Naive thymus-derived CD4-positive, alpha-beta T cell (primary cell): ENCODE measurements at regions of chr20 and their contacts with region 1.

Region 1: GRCh38 chr20:51404298-51405060 is 138.0 kb downstream of the NFATC2 start:
- DNase-seq: peak; percentile 21 to 78 (median 36)
- ATAC-seq: peak; percentile 89
- H3K4me3 ChIP-seq: no peak overlapping the region
- H3K4me3 Mint-ChIP-seq: peak overlapping the region in 5 of 10 donors; percentile 3 to 74 (median 21)
- H3K27ac ChIP-seq: peak overlapping the region; percentile 62
- H3K27ac Mint-ChIP-seq: peak overlapping the region; percentile 82 to 100 (median 97)
- H3K4me1 ChIP-seq: peaks cover 48 to 95% of the 10 kb centered on the region in 2 donors
- H3K4me1 Mint-ChIP-seq: peaks cover 42 to 89% (median 62%) of the 10 kb centered on the region in 7 donors
- H3K27me3 ChIP-seq: no peaks in the 10 kb centered on the region
- H3K27me3 Mint-ChIP-seq: no peaks in the 10 kb centered on the region

Region 2: DNA sequence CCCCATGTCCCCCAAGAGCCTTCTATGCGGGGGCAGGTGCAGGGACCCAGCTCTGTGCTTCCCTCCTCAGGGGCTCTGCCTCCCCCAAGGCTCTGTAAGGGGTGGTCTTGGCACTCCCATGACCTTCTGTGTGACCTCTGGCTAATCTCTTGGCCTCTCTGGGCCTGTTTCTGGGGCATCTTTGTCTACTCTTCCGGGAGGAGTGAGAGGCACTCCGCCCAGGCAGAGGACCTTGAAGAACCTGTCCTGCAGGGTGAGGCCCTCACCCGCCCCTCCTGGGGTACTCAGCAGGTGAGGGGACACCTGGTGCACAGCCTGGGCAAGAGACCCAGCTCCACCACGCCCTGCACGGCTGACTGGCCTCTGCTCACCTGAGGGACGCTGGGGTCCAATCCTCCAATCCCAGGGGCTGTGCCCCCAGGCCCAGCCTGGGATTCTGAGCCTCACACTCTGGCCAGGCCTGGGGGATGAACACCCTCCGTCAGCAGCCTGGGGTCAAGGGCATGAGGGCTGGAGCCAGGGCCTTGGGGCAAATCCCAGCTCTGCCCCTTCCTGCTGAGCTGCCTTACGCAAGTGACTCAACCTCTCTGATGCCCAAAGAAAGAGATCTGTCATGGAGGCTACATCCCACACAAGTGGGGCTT is 1044.3 kb before region 1 on chr20:
- CTCF ChIA-PET with region 1: no interaction called
- POLR2A ChIA-PET with region 1: no interaction called
- intact Hi-C with region 1: no loop called
- DNase-seq: no peak
- ATAC-seq: no peak
- H3K4me3 ChIP-seq: no peak overlapping the region
- H3K4me3 Mint-ChIP-seq: no peak overlapping the region
- H3K27ac ChIP-seq: no peak overlapping the region
- H3K27ac Mint-ChIP-seq: no peak overlapping the region
- H3K4me1 ChIP-seq: no peaks in the 10 kb centered on the region
- H3K4me1 Mint-ChIP-seq: peaks cover 0 to 7% (median 0%) of the 10 kb centered on the region in 7 donors
- H3K27me3 ChIP-seq: no peaks in the 10 kb centered on the region
- H3K27me3 Mint-ChIP-seq: peaks cover 0 to 4% (median 2%) of the 10 kb centered on the region in 5 donors

Region 3: GRCh38 chr20:50958615-50959542 is 445.6 kb before region 1 on chr20 and contains the start of gene MOCS3:
- CTCF ChIA-PET with region 1: no interaction called
- POLR2A ChIA-PET with region 1: no interaction called
- intact Hi-C with region 1: loop called in 1 of 2 experiments (anchors 2 kb)
- DNase-seq: peak; percentile 57 to 95 (median 91)
- ATAC-seq: peak; percentile 86
- H3K4me3 ChIP-seq: peak within 1 kb of the TSS; percentile 93
- H3K4me3 Mint-ChIP-seq: peak within 1 kb of the TSS; percentile 92 to 99 (median 98)
- H3K27ac ChIP-seq: peak within 1 kb of the TSS; percentile 93
- H3K27ac Mint-ChIP-seq: peak within 1 kb of the TSS; percentile 97 to 100 (median 100)
- H3K4me1 ChIP-seq: peaks cover 22 to 25% of the 10 kb centered on the region in 2 donors
- H3K4me1 Mint-ChIP-seq: peaks cover 25 to 78% (median 66%) of the 10 kb centered on the region in 7 donors
- H3K27me3 ChIP-seq: no peaks in the 10 kb centered on the region
- H3K27me3 Mint-ChIP-seq: peaks cover 0 to 2% (median 0%) of the 10 kb centered on the region in 5 donors
- total RNA-seq, gene MOCS3: 2.5 to 8.9 (median 5.2) TPM

Region 4: GRCh38 chr20:51172974-51173397 is 231.5 kb before region 1 on chr20:
- CTCF ChIA-PET with region 1: no interaction called
- POLR2A ChIA-PET with region 1: no interaction called
- intact Hi-C with region 1: no loop called
- DNase-seq: no peak
- ATAC-seq: no peak
- H3K4me3 ChIP-seq: no peak overlapping the region
- H3K4me3 Mint-ChIP-seq: no peak overlapping the region
- H3K27ac ChIP-seq: no peak overlapping the region
- H3K27ac Mint-ChIP-seq: no peak overlapping the region
- H3K4me1 ChIP-seq: no peaks in the 10 kb centered on the region
- H3K4me1 Mint-ChIP-seq: peaks cover 0 to 2% (median 0%) of the 10 kb centered on the region in 7 donors
- H3K27me3 ChIP-seq: peaks cover 0 to 4% of the 10 kb centered on the region in 2 donors
- H3K27me3 Mint-ChIP-seq: peaks cover 22 to 55% (median 37%) of the 10 kb centered on the region in 5 donors

Region 5: GRCh38 chr20:51417250-51418136 is 13.0 kb after region 1 on chr20:
- CTCF ChIA-PET with region 1: interaction called, 3 read pairs
- POLR2A ChIA-PET with region 1: no interaction called
- intact Hi-C with region 1: loop called in 1 of 2 experiments (anchors 2 kb)
- DNase-seq: no peak
- ATAC-seq: peak; percentile 57
- H3K4me3 ChIP-seq: no peak overlapping the region
- H3K4me3 Mint-ChIP-seq: peak overlapping the region in 3 of 10 donors; percentile 23 to 37 (median 31)
- H3K27ac ChIP-seq: no peak overlapping the region
- H3K27ac Mint-ChIP-seq: peak overlapping the region; percentile 9 to 87 (median 72)
- H3K4me1 ChIP-seq: peaks cover 0 to 78% of the 10 kb centered on the region in 2 donors
- H3K4me1 Mint-ChIP-seq: peaks cover 10 to 69% (median 28%) of the 10 kb centered on the region in 7 donors
- H3K27me3 ChIP-seq: no peaks in the 10 kb centered on the region
- H3K27me3 Mint-ChIP-seq: no peaks in the 10 kb centered on the region

Region 6: GRCh38 chr20:51500311-51500710 is 95.8 kb after region 1 on chr20:
- CTCF ChIA-PET with region 1: no interaction called
- POLR2A ChIA-PET with region 1: no interaction called
- intact Hi-C with region 1: loop called in 1 of 2 experiments (anchors 1 kb)
- DNase-seq: peak in 8 of 9 donors; percentile 38 to 74 (median 54)
- ATAC-seq: peak; percentile 89
- H3K4me3 ChIP-seq: no peak overlapping the region
- H3K4me3 Mint-ChIP-seq: peak overlapping the region; percentile 21 to 99 (median 54)
- H3K27ac ChIP-seq: peak overlapping the region; percentile 58
- H3K27ac Mint-ChIP-seq: peak overlapping the region; percentile 65 to 100 (median 95)
- H3K4me1 ChIP-seq: peaks cover 59 to 60% of the 10 kb centered on the region in 2 donors
- H3K4me1 Mint-ChIP-seq: peaks cover 63 to 93% (median 87%) of the 10 kb centered on the region in 7 donors
- H3K27me3 ChIP-seq: no peaks in the 10 kb centered on the region
- H3K27me3 Mint-ChIP-seq: no peaks in the 10 kb centered on the region

Region 7: GRCh38 chr20:51525241-51526129 is 121.0 kb after region 1 on chr20:
- CTCF ChIA-PET with region 1: no interaction called
- POLR2A ChIA-PET with region 1: no interaction called
- intact Hi-C with region 1: loop called in 1 of 2 experiments (anchors 5 kb)
- DNase-seq: peak in 2 of 9 donors; percentile 29 to 49
- ATAC-seq: peak; percentile 71
- H3K4me3 ChIP-seq: peak overlapping the region; percentile 33
- H3K4me3 Mint-ChIP-seq: peak overlapping the region; percentile 70 to 86 (median 79)
- H3K27ac ChIP-seq: peak overlapping the region; percentile 46
- H3K27ac Mint-ChIP-seq: peak overlapping the region; percentile 66 to 90 (median 87)
- H3K4me1 ChIP-seq: peaks cover 32 to 59% of the 10 kb centered on the region in 2 donors
- H3K4me1 Mint-ChIP-seq: peaks cover 62 to 81% (median 78%) of the 10 kb centered on the region in 7 donors
- H3K27me3 ChIP-seq: no peaks in the 10 kb centered on the region
- H3K27me3 Mint-ChIP-seq: no peaks in the 10 kb centered on the region